ENCODE measurements at regions of chr7 and their contacts with region 1.

Region 1: DNA sequence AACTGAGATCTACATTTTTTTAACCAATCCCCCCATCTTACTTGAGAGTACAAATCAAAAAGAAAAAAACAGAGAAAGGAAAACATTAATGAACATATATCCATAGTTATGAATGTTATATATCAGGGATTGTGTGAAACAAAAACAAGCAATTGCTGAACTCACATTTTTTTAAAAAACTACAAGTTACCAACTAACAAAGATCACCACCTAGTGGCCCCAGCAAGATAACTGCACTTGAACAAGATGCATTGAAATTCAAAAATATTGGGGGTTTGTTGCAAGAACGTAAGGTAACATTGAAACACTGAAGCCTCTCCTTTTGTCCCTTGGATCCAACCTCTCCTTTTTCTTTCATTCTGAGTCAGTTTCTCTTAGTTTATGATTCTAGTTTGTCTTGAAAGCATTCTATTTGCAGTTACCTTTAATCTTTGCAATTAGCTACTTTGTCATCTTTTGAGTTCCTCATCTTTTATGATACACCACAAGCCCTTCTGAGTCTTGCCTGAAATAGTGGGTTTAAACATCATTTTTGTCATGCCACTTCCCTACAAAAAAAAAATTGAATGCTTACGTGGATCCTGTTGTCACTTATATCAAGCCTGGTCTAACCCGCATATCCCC is 87.3 kb upstream of the TES start:
- H3K4me3 Mint-ChIP-seq: no peak overlapping the region
- H3K27ac Mint-ChIP-seq: no peak overlapping the region
- H3K4me1 Mint-ChIP-seq: peaks cover 11% of the 10 kb centered on the region
- H3K27me3 Mint-ChIP-seq: no peaks in the 10 kb centered on the region

Region 2: DNA sequence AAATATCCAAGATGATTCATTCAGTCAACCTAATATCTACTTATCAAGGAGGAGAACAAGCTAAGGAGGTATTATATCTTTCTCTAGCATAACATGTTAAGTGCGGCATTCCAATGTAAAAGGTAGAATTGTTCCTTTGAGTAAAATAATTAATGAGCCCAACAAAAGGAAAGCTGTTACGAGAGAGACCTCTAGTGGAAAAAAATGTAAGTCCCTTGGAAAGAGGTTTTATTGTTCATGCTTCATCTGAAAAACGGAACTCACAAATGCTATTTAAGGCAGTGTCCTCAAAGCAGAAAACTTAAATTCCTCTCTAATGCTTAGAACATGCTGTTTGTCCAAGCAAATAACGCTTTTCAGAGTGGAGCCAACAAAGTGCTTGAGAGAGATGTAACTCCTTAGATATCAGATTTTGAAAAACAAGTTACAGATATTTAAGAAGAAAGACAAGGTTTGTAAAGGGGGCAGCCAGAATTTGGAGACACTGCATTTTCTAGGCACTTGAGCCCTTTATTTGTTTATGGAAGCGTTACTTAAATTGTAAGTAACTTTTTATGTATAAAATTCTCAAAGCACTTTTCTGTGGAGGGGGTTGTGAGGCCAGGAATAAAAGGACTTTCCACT is 212.4 kb before region 1 on chr7:
- intact Hi-C with region 1: loop called (anchors 2 kb)
- H3K4me3 Mint-ChIP-seq: no peak overlapping the region
- H3K27ac Mint-ChIP-seq: no peak overlapping the region
- H3K4me1 Mint-ChIP-seq: no peaks in the 10 kb centered on the region
- H3K27me3 Mint-ChIP-seq: peaks cover 2% of the 10 kb centered on the region

Region 3: GRCh38 chr7:116011584-116011983 is 111.5 kb before region 1 on chr7:
- intact Hi-C with region 1: loop called (anchors 5 kb)
- H3K4me3 Mint-ChIP-seq: no peak overlapping the region
- H3K27ac Mint-ChIP-seq: no peak overlapping the region
- H3K4me1 Mint-ChIP-seq: peaks cover 19% of the 10 kb centered on the region
- H3K27me3 Mint-ChIP-seq: no peaks in the 10 kb centered on the region

Region 4: DNA sequence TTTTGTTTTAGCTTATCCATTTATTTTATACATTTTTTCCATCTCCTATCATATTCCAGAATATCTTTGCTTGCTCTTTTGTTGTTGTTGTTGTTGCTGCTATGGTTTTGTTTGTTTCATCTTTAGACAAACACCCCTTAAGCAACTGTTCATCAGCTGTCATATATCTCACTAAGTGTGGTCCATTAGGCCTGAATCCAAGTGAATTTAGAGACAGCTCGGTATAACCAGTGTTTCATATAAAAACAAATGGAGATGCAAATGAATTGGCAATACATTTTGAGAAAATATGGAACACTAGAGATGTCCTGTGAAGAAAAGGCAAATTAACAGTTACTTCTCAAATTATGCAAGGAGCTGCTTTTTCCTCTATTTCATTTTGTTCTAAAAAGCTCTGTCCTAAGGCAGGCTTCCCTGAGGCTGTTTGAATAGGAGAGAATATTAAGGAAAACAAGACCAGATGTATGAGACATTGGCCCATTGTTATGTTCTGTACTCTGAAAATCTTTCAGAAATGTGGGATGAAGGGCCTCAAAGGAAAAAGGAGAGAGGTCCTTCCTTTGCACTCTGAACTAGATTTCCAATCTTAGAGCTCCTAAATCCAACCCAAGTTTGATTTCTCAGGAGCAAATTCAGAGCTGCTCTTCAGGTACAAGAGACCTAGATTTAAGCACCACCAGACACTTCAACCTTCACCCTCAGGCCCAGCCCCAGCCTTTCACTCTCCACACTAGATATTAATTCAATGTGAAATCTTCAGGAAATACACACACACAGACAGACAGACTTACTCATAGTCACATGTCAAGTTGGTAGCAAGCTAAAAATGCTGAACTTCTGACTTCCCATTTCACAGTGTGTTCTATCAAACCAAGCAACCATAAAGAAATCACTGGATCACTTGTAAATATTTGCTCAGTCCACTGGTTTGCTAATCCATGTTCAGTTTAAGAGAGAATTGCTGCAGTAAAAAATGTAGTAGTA is 98.0 kb before region 1 on chr7:
- intact Hi-C with region 1: loop called (anchors 5 kb)
- H3K4me3 Mint-ChIP-seq: peak overlapping the region; percentile 88
- H3K27ac Mint-ChIP-seq: peak overlapping the region; percentile 89
- H3K4me1 Mint-ChIP-seq: peaks cover 69% of the 10 kb centered on the region
- H3K27me3 Mint-ChIP-seq: no peaks in the 10 kb centered on the region

Region 5: DNA sequence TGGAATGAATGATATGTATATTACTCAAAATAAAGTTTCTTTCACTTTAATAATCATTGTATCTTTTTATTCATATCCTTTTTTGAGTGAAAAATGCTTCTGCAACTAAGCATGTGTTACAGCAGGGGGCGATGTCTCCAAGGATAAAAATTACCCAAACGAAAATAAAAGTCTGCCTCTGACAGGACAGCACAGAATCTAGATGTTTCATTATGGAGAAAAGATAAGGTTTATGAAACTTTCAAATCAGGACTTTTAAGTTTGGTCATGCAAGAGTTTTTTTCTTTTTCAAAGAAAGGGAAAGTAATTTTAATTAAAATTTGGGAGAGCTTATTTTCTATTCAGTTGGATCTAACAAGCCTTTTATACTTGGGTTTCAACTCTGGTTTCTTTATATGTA is 135.7 kb after region 1 on chr7:
- intact Hi-C with region 1: no loop called
- H3K4me3 Mint-ChIP-seq: no peak overlapping the region
- H3K27ac Mint-ChIP-seq: no peak overlapping the region
- H3K4me1 Mint-ChIP-seq: no peaks in the 10 kb centered on the region
- H3K27me3 Mint-ChIP-seq: peaks cover 2% of the 10 kb centered on the region

Measured in dendritic cell treated with granulocyte-macrophage colony-stimulating factor and Interleukin-4, amounts not matched to agents 40 ng/mL and 50 ng/mL, for 4 days (primary cell).